Activated naive CD4-positive, alpha-beta T cell treated with anti-CD3 and anti-CD28 coated beads for 36 hours (primary cell): ENCODE measurements at regions of chr12 and their contacts with region 1.

Region 1: GRCh38 chr12:81644503-81644902 is 114.6 kb downstream of the PPFIA2 start:
- DNase-seq: no peak
- H3K4me3 Mint-ChIP-seq: no peak overlapping the region
- H3K27ac Mint-ChIP-seq: no peak overlapping the region
- H3K4me1 Mint-ChIP-seq: no peaks in the 10 kb centered on the region
- H3K27me3 Mint-ChIP-seq: peaks cover 11% of the 10 kb centered on the region

Region 2: DNA sequence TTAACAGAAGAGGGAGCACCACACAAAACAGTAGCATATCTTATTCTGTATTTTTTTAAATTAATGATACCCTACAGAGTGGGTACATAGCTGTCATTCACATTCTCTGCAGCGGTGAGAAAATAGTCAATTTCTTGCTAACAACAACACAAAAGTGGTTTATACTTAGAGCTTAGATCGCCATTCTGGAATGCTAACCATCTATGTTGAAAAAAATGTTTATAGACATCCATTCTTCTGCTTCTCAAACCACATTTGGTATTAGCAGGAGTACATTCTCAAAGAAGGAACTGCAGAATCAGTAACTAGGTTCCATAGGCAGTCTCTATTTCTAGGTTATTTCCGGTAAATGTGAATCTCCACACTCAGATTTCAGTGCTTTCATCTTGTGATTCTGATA is 71.3 kb before region 1 on chr12:
- CTCF ChIA-PET with region 1: no interaction called
- intact Hi-C with region 1: no loop called
- DNase-seq: no peak
- H3K4me3 Mint-ChIP-seq: no peak overlapping the region
- H3K27ac Mint-ChIP-seq: no peak overlapping the region
- H3K4me1 Mint-ChIP-seq: no peaks in the 10 kb centered on the region
- H3K27me3 Mint-ChIP-seq: no peaks in the 10 kb centered on the region

Region 3: GRCh38 chr12:81797100-81797499 is 152.6 kb after region 1 on chr12:
- CTCF ChIA-PET with region 1: no interaction called
- intact Hi-C with region 1: loop called (anchors 10 kb)
- DNase-seq: no peak
- H3K4me3 Mint-ChIP-seq: no peak overlapping the region
- H3K27ac Mint-ChIP-seq: no peak overlapping the region
- H3K4me1 Mint-ChIP-seq: peaks cover 15% of the 10 kb centered on the region
- H3K27me3 Mint-ChIP-seq: peaks cover 15% of the 10 kb centered on the region

Region 4: GRCh38 chr12:82326905-82327503 is 682.5 kb after region 1 on chr12:
- CTCF ChIA-PET with region 1: no interaction called
- intact Hi-C with region 1: loop called (anchors 1 kb)
- DNase-seq: no peak
- H3K4me3 Mint-ChIP-seq: no peak overlapping the region
- H3K27ac Mint-ChIP-seq: no peak overlapping the region
- H3K4me1 Mint-ChIP-seq: no peaks in the 10 kb centered on the region
- H3K27me3 Mint-ChIP-seq: no peaks in the 10 kb centered on the region